Activated T-helper 1 cell treated with anti-CD3 and anti-CD28 coated beads, Interleukin-12 subunit alpha, Interleukin-12 subunit beta, Interleukin-2, Interleukin-4 antibody, amounts not matched to agents 30 ng/mL and 10 ng/mL and 1 ng/mL, durations not matched to agents 14 hours and 24 hours and 36 hours (primary cell): ENCODE measurements at regions of chr16 and their contacts with region 1.

Region 1: GRCh38 chr16:79628501-79628975 is 28.0 kb upstream of the MAF start:
- DNase-seq: peak; percentile 77
- H3K4me3 Mint-ChIP-seq: peak overlapping the region; percentile 68
- H3K27ac Mint-ChIP-seq: peak overlapping the region; percentile 93
- H3K4me1 Mint-ChIP-seq: peaks cover 77% of the 10 kb centered on the region
- H3K27me3 Mint-ChIP-seq: peaks cover 8% of the 10 kb centered on the region

Region 2: DNA sequence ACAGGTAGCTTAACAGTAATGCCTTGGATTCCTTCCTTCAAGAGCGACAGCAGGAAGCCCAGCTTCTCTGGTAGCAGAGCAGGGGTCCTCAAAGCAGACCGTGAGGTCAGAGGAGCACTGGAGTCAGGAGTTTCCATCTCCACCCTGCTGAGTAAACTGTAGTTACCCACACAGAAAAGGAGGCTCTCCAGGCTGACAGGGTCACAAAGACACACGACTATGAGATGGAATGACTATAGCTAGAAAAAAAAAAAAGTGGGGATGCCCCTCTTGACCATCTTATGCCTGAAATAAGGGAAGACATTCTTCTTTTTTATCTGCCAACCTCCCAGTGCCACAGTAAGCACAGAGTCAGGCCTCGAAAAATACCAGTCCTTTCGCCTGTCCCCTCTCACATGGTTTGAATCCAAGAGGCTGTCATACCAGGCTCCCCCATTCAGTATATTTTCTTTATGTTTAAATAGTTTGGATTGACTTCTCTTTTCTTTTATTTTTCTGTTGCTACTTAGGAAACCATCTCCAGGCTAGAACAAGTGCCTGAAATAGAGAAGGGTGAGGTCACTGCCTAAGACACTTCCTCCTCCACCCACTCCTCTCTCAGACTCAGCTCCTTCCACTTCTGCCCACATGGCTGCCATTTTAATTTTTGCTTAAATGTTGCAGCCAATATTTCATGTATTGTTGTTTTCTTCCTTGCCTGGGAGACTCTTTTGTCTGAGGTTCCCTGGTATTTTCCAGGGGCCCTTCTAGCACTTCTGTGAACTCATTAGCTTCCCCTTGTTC is 735.4 kb before region 1 on chr16:
- intact Hi-C with region 1: loop called (anchors 2 kb)
- DNase-seq: no peak
- H3K4me3 Mint-ChIP-seq: no peak overlapping the region
- H3K27ac Mint-ChIP-seq: peak overlapping the region; percentile 84
- H3K4me1 Mint-ChIP-seq: peaks cover 55% of the 10 kb centered on the region
- H3K27me3 Mint-ChIP-seq: no peaks in the 10 kb centered on the region

Region 3: GRCh38 chr16:79253100-79253631 is 375.4 kb before region 1 on chr16:
- intact Hi-C with region 1: no loop called
- DNase-seq: no peak
- H3K4me3 Mint-ChIP-seq: no peak overlapping the region
- H3K27ac Mint-ChIP-seq: no peak overlapping the region
- H3K4me1 Mint-ChIP-seq: no peaks in the 10 kb centered on the region
- H3K27me3 Mint-ChIP-seq: peaks cover 4% of the 10 kb centered on the region

Region 4: DNA sequence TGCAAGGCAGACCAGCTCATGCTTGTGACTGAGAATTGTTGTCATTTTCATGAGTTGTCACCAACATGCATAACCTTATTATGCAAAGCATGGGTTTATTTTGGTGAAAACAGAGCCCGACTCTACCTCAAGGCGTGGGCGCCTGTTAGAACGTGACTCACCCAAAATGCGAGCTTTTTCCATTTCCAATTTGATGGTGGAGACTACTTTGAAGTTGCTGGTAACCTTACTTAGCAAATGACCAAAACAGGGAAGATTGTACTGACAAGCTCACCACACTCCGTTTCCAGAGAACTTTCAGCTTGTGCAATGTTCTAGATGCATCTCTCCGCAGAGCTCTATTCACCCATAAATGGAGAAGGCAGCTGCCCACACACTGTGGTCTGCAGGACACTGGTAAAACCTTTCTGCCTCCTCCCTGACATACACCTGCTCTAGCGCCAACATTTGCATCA is 312.5 kb before region 1 on chr16:
- intact Hi-C with region 1: loop called (anchors 2 kb)
- DNase-seq: peak; percentile 54
- H3K4me3 Mint-ChIP-seq: peak overlapping the region; percentile 64
- H3K27ac Mint-ChIP-seq: peak overlapping the region; percentile 90
- H3K4me1 Mint-ChIP-seq: peaks cover 29% of the 10 kb centered on the region
- H3K27me3 Mint-ChIP-seq: peaks cover 10% of the 10 kb centered on the region

Region 5: GRCh38 chr16:79640513-79641355 is 12.2 kb after region 1 on chr16:
- intact Hi-C with region 1: loop called (anchors 1 kb)
- DNase-seq: peak; percentile 17
- H3K4me3 Mint-ChIP-seq: peak overlapping the region; percentile 13
- H3K27ac Mint-ChIP-seq: peak overlapping the region; percentile 49
- H3K4me1 Mint-ChIP-seq: peaks cover 55% of the 10 kb centered on the region
- H3K27me3 Mint-ChIP-seq: no peaks in the 10 kb centered on the region

Region 6: GRCh38 chr16:79713609-79714309 is 85.2 kb after region 1 on chr16:
- intact Hi-C with region 1: loop called (anchors 5 kb)
- DNase-seq: no peak
- H3K4me3 Mint-ChIP-seq: peak overlapping the region; percentile 42
- H3K27ac Mint-ChIP-seq: peak overlapping the region; percentile 51
- H3K4me1 Mint-ChIP-seq: peaks cover 25% of the 10 kb centered on the region
- H3K27me3 Mint-ChIP-seq: peaks cover 4% of the 10 kb centered on the region

Region 7: GRCh38 chr16:79843631-79844043 is 215.1 kb after region 1 on chr16:
- intact Hi-C with region 1: loop called (anchors 1 kb)
- DNase-seq: no peak
- H3K4me3 Mint-ChIP-seq: peak overlapping the region; percentile 45
- H3K27ac Mint-ChIP-seq: peak overlapping the region; percentile 70
- H3K4me1 Mint-ChIP-seq: peaks cover 42% of the 10 kb centered on the region
- H3K27me3 Mint-ChIP-seq: no peaks in the 10 kb centered on the region